ENCODE measurements at regions of chr14 and their contacts with region 1.

Region 1: GRCh38 chr14:64478634-64479250 is 13.4 kb downstream of the AKAP5 start:
- DNase-seq: peak; percentile 30 to 63 (median 42)
- H3K4me3 ChIP-seq: no peak overlapping the region
- H3K27ac ChIP-seq: no peak overlapping the region
- H3K4me1 ChIP-seq: no peaks in the 10 kb centered on the region
- H3K27me3 ChIP-seq: no peaks in the 10 kb centered on the region

Region 2: DNA sequence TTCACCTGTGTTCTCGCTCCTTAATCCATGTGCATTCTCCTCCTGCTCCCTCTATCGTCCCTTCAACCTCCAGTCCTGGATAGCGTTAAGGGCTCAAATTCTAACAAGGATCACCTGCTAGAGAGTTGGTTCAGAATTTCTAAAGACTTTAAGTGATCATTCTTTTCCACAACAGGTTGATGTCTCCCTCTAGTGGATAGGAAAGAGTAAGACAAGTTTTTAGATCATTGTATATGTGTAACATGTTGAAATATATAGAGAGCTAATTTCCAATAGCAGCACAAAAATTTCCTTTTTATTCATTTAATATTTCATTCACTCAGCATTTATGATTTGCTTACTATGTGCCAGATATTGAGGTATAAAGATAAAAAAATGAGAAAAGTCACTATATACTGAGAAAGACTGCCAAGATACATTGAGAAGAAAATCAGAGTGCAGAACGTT is 175.2 kb before region 1 on chr14:
- CTCF ChIA-PET with region 1: interaction called, 12 read pairs
- POLR2A ChIA-PET with region 1: no interaction called
- DNase-seq: peak; percentile 52 to 78 (median 74)
- H3K4me3 ChIP-seq: no peak overlapping the region
- H3K27ac ChIP-seq: no peak overlapping the region
- H3K4me1 ChIP-seq: no peaks in the 10 kb centered on the region
- H3K27me3 ChIP-seq: no peaks in the 10 kb centered on the region

Region 3: DNA sequence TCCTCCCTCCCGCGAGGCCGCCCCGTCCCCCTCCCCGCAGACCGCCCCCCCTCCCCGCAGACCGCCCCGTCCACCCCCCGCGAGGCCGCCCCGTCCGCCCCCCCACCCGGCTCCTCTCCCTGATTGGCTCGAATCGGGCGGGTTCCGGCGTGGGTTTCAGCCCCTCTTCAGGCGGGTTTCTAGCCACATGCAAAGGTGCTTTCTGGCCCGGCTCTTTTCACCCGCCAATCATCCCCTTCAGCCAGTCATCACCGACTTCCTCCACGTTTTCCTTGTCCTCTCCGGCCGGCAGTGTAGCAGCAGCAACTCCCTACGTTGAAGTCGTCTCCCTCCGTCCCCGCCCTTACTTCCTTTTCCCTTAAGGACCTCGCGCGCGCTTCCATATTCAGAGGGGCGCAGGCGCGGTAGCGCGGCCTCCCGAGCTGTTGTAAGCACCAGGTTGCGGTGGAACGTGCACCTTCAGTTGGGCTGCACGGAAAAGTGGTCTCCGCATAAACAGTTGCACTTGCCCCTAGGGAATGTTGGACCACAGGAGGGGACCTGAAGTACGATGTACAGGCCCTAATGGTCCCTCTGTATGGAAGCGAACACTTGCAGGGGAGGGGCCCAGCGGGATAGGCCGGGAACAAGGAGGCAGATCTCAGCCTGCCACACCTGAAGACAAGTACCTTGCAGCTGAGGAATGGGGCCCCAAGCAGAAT is 140.0 kb before region 1 on chr14:
- CTCF ChIA-PET with region 1: interaction called, 66 read pairs
- POLR2A ChIA-PET with region 1: no interaction called
- DNase-seq: peak; percentile 95 to 98 (median 97)
- H3K4me3 ChIP-seq: peak overlapping the region; percentile 60 to 92 (median 86)
- H3K27ac ChIP-seq: peak overlapping the region in 1 of 2 experiments; percentile 47
- H3K4me1 ChIP-seq: peaks cover 8 to 21% (median 13%) of the 10 kb centered on the region in 4 experiments
- H3K27me3 ChIP-seq: no peaks in the 10 kb centered on the region

Region 4: DNA sequence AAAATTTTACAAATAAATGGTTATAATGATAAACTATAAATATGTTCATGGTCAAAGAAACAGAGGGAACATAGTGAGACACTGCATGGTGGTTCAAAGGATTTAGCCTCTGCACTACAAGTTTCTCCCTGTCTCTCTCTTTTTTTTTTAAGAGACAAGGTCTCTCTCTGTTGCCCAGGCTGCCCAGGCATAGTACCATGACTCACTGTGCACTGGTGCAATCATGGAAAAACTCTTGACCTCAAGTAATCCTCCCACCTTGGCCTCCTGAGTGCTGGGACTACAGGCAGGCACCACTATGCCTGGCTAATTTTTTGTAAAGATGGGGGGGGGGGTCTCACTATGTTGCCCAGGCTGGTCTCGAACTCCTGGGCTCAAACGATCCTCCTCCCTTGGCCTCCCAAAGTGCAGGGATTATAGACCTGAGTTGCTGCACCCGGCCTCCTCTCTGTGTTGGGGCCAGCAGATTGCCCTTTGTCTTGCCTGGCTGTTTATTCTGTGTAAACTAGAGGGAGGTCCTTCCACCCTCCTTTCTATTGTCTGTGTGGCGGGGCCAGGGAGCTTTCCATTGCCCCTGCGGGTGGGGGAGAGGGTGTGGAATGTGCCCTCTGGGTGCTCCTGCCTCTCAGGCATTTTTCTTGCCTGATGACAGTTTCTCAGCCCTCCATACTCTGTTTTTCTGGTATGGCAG is 68.5 kb before region 1 on chr14:
- CTCF ChIA-PET with region 1: no interaction called
- POLR2A ChIA-PET with region 1: no interaction called
- DNase-seq: no peak
- H3K4me3 ChIP-seq: no peak overlapping the region
- H3K27ac ChIP-seq: no peak overlapping the region
- H3K4me1 ChIP-seq: peaks cover 0 to 14% (median 1%) of the 10 kb centered on the region in 4 experiments
- H3K27me3 ChIP-seq: no peaks in the 10 kb centered on the region

Region 5: GRCh38 chr14:64434528-64434927 is 44.2 kb before region 1 on chr14:
- CTCF ChIA-PET with region 1: interaction called, 47 read pairs
- POLR2A ChIA-PET with region 1: no interaction called
- DNase-seq: no peak
- H3K4me3 ChIP-seq: no peak overlapping the region
- H3K27ac ChIP-seq: no peak overlapping the region
- H3K4me1 ChIP-seq: no peaks in the 10 kb centered on the region
- H3K27me3 ChIP-seq: no peaks in the 10 kb centered on the region

Region 6: GRCh38 chr14:64465191-64465822 is 13.4 kb before region 1 on chr14 and contains the start of gene AKAP5:
- CTCF ChIA-PET with region 1: interaction called, 14 read pairs
- POLR2A ChIA-PET with region 1: no interaction called
- DNase-seq: peak; percentile 58 to 88 (median 82)
- H3K4me3 ChIP-seq: peak within 1 kb of the TSS; percentile 63 to 86 (median 72)
- H3K27ac ChIP-seq: no peak within 1 kb of the TSS
- H3K4me1 ChIP-seq: peaks cover 11 to 16% (median 14%) of the 10 kb centered on the region in 4 experiments
- H3K27me3 ChIP-seq: no peaks in the 10 kb centered on the region

Region 7: GRCh38 chr14:64491637-64492036 is 12.9 kb after region 1 on chr14:
- CTCF ChIA-PET with region 1: interaction called, 14 read pairs
- POLR2A ChIA-PET with region 1: no interaction called
- DNase-seq: no peak
- H3K4me3 ChIP-seq: no peak overlapping the region
- H3K27ac ChIP-seq: no peak overlapping the region
- H3K4me1 ChIP-seq: no peaks in the 10 kb centered on the region
- H3K27me3 ChIP-seq: no peaks in the 10 kb centered on the region

Region 8: GRCh38 chr14:64503478-64504309 is 25.0 kb after region 1 on chr14 and contains the start of gene ZBTB25:
- CTCF ChIA-PET with region 1: interaction called, 16 read pairs
- POLR2A ChIA-PET with region 1: no interaction called
- DNase-seq: peak; percentile 93 to 98 (median 98)
- H3K4me3 ChIP-seq: peak within 1 kb of the TSS; percentile 75 to 97 (median 90)
- H3K27ac ChIP-seq: peak within 1 kb of the TSS; percentile 97 to 99
- H3K4me1 ChIP-seq: peaks cover 31 to 68% (median 56%) of the 10 kb centered on the region in 4 experiments
- H3K27me3 ChIP-seq: no peaks in the 10 kb centered on the region

Region 9: DNA sequence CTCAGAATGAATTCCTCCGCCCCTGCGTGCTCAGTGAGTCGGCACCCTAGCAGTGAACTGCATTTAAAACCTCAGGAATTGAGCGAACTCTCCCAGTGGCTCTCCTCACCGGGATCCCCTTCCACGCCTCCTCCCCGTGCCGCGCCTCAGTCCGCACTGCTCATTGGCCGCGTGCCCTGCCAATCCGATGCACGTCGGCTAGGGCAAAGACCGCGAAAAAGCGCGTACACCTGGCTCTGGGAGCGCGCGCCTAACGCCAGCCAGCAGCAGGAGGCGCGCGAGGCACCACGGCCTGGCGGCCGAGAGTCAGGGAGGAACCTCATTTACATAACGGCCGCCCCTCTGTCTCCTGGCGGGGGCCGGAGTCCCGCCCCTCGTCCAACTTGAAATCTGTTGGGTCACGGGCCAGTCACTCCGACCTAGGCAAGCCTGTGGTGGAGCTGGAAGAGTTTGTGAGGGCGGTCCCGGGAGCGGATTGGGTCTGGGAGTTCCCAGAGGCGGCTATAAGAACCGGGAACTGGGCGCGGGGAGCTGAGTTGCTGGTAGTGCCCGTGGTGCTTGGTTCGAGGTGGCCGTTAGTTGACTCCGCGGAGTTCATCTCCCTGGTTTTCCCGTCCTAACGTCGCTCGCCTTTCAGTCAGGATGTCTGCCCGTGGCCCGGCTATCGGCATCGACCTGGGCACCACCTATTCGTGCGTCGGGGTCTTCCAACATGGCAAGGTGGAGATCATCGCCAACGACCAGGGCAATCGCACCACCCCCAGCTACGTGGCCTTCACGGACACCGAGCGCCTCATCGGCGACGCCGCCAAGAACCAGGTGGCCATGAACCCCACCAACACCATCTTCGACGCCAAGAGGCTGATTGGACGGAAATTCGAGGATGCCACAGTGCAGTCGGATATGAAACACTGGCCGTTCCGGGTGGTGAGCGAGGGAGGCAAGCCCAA is 61.7 kb after region 1 on chr14 and contains the start of gene HSPA2:
- CTCF ChIA-PET with region 1: no interaction called
- POLR2A ChIA-PET with region 1: no interaction called
- DNase-seq: peak; percentile 98 to 99 (median 99)
- H3K4me3 ChIP-seq: peak within 1 kb of the TSS; percentile 64 to 88 (median 74)
- H3K27ac ChIP-seq: peak within 1 kb of the TSS in 1 of 2 experiments; percentile 31
- H3K4me1 ChIP-seq: peaks cover 0 to 21% (median 21%) of the 10 kb centered on the region in 4 experiments
- H3K27me3 ChIP-seq: peaks cover 9 to 60% (median 34%) of the 10 kb centered on the region in 5 experiments

Region 10: GRCh38 chr14:64855721-64856528 is 377.2 kb after region 1 on chr14:
- CTCF ChIA-PET with region 1: no interaction called
- POLR2A ChIA-PET with region 1: no interaction called
- DNase-seq: no peak
- H3K4me3 ChIP-seq: no peak overlapping the region
- H3K27ac ChIP-seq: no peak overlapping the region
- H3K4me1 ChIP-seq: peaks cover 0 to 11% (median 1%) of the 10 kb centered on the region in 4 experiments
- H3K27me3 ChIP-seq: peaks cover 0 to 12% (median 0%) of the 10 kb centered on the region in 5 experiments

Measured in common myeloid progenitor, CD34-positive (primary cell).